ENCODE measurements at regions of chr4 and their contacts with region 1.

Region 1: DNA sequence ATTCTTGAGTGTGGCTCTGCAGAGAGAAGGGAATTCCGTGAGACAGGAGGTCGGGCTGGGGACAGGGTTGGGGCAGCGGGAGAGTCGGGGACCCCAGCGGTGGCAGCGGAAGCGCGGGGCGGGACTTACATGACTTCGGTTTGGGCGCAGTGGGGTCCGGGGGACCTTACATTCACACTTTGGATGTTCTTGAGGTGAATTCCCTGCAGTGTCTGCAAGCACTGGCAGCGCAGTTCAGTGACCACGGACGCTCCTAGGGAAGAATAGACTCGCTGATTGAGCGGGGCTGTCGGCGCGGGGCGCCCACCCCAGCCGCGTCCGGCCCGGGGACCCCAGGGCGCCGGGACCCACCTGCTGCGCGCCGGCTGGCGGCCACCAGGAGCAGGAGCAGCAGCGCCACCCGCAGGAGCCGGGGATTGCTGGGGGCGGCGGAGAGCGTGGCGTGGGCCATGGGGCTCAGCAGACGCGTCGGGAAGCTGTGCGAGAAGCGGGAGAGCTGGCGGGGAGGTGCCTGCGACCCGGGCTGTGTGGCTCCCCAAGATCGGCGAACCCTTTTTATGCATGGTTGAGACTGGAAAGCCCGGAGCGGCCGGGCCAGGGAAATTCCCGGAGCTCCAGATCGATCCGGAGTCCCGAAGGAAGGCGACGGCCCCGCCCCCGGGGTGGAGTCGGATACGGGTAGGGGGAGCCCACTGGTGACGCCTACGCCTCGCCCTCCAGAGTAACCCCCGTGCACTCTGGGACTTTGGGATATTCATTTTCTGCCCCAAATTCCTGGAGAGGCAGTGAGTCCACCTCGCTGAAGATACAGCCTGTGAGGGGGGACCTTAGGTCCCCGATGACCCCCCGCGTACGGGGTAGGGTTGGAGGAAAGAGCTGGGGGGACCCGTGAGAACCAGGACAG is at the start of gene CXCL3:
- DNase-seq: peak; percentile 94
- H3K4me3 ChIP-seq: peak within 1 kb of the TSS; percentile 73 to 82 (median 77)
- H3K27ac ChIP-seq: peak within 1 kb of the TSS; percentile 86
- H3K4me1 ChIP-seq: peaks cover 18% of the 10 kb centered on the region
- H3K27me3 ChIP-seq: no peaks in the 10 kb centered on the region
- CTCF ChIP-seq: peak; percentile 2 to 30
- total RNA-seq, gene CXCL3: 1.3 to 29.4 TPM

Region 2: DNA sequence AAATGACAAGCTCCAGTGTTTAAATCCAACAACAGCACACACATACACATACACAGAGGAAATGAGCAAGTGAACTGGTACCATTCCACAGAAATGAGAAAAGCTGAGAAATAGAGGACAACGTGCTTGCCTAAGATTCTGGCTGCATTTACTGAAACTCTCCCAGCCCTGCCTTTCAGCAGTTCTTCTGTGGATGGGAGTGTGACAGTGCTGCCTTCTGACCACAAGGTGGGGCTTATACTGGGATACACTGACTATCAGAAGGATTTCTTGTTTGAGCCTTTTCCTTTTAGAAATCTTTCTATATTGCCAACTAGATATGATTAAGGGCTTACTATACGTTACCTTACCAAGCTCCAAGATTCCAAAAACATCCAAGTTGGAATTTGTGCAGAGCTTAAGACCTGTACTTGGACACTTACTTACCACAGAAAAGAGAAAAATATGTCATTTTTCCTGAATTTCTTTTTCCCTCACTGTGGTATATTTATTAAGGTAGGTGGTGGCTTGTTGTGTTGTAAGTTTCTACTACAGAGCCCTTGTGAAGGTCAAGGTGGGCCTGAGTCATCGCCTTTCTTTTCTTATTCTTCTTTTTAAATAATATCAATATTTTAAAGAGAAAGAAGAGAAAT is 308.8 kb before region 1 on chr4:
- CTCF ChIA-PET with region 1: no interaction called
- dilution Hi-C with region 1: no loop called
- in situ Hi-C with region 1: no loop called
- intact Hi-C with region 1: loop called (anchors 5 kb)
- DNase-seq: peak; percentile 84
- H3K4me3 ChIP-seq: no peak overlapping the region
- H3K27ac ChIP-seq: no peak overlapping the region
- H3K4me1 ChIP-seq: peaks cover 35% of the 10 kb centered on the region
- H3K27me3 ChIP-seq: no peaks in the 10 kb centered on the region
- CTCF ChIP-seq: peak; percentile 88 to 96

Region 3: DNA sequence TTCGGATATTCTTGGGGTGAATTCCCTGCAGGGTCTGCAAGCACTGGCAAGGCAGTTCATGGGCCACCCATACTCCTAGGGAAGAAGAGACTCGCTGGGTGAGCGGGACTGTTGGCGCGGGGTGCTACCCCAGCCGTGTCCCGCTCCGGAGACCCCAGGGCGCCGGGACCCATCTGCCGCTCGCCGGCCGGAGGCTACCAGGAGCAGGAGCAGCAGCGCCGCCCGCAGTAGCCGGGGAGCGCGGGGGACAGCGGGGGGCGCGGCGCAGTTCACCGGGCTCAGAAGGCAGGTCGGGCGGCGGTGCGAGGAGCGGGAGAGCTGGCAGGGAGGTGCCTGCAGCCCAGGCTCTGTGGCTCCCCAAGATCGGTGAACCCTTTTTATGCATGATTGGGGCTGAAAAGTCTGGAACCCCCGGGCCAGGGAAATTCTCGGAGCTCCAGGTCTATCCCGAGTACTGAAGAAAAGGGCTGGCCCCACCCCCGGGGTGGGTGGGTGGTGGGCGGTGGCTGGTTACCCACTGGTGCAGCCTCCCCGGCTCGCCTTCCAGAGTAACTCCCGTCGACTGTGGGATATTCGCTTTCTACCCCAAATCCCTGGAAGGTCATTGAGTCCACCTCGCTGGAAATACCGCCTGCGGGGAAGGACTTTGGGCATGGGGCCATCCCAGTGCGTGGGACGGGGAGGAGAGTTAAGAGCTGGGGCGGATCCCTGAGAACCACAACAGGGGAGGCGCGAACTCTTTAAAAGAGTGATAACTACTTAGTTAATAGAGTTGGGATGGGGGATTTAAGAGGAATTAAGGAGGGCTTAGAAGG is 94.1 kb before region 1 on chr4:
- CTCF ChIA-PET with region 1: no interaction called
- dilution Hi-C with region 1: no loop called
- in situ Hi-C with region 1: no loop called
- intact Hi-C with region 1: loop called (anchors 5 kb)
- DNase-seq: peak; percentile 18
- H3K4me3 ChIP-seq: peak overlapping the region in 2 of 3 experiments; percentile 33 to 39
- H3K27ac ChIP-seq: no peak overlapping the region
- H3K4me1 ChIP-seq: peaks cover 9% of the 10 kb centered on the region
- H3K27me3 ChIP-seq: no peaks in the 10 kb centered on the region
- CTCF ChIP-seq: no peak

Region 4: GRCh38 chr4:74098450-74098994 is 60.1 kb after region 1 on chr4:
- CTCF ChIA-PET with region 1: interaction called, 25 read pairs
- dilution Hi-C with region 1: loop called (anchors 5 kb)
- in situ Hi-C with region 1: loop called in 1 of 2 experiments (anchors 10 kb)
- intact Hi-C with region 1: loop called (anchors 2 kb)
- DNase-seq: no peak
- H3K4me3 ChIP-seq: peak overlapping the region; percentile 71 to 88 (median 85)
- H3K27ac ChIP-seq: peak overlapping the region; percentile 94
- H3K4me1 ChIP-seq: peaks cover 17% of the 10 kb centered on the region
- H3K27me3 ChIP-seq: no peaks in the 10 kb centered on the region
- CTCF ChIP-seq: no peak

Measured in mammary epithelial cell (primary cell).